K562 (cell line): ENCODE measurements at regions of chr3 and their contacts with region 1.

Region 1: DNA sequence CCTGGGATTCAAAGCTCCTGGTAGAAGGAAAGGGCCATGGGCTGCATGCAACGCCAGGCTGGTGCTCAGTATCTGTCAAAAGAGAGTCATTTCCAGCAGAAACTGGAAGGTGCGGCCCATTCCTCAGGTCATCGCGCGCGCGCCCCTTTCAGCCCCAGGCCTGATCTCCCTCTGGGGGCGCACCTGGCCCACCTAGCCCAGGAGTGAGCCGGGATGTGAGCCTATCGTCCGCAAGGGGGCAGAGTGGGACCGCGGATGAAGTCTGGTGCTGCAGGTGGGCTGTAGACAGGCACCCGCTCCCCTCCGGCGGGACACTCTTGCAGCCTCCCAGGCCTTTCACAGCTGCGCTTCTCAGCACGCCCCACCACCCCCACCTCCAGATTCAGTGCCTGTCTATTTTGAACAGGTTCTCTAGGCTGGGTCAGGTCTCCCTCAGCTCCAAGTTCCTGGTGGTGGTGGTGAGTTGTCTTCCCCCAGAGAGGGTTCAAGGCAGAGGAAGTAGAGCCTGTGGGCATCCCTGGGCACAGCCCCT is 5.8 kb upstream of the RPL29 start:
- DNase-seq: peak; percentile 83 to 84 (median 83)
- ATAC-seq: peak; percentile 92
- H3K4me3 ChIP-seq: no peak overlapping the region
- H3K27ac ChIP-seq: no peak overlapping the region
- H3K4me1 ChIP-seq: peaks cover 31 to 44% of the 10 kb centered on the region in 2 experiments
- H3K27me3 ChIP-seq: no peaks in the 10 kb centered on the region
- CTCF ChIP-seq: peak; percentile 90 to 99 (median 96)
- EP300 ChIP-seq: no peak
- POLR2A ChIP-seq: no peak
- RAD21 ChIP-seq: peak; percentile 77 to 91

Region 2: GRCh38 chr3:52123106-52123725 is 121.7 kb after region 1 on chr3:
- CTCF ChIA-PET with region 1: interaction called, 17 read pairs
- POLR2A ChIA-PET with region 1: interaction called, 3 read pairs
- in situ Hi-C with region 1: loop called (anchors 5 kb)
- intact Hi-C with region 1: no loop called
- DNase-seq: peak; percentile 73 to 82 (median 78)
- ATAC-seq: peak; percentile 95
- H3K4me3 ChIP-seq: no peak overlapping the region
- H3K27ac ChIP-seq: no peak overlapping the region
- H3K4me1 ChIP-seq: peaks cover 6 to 13% of the 10 kb centered on the region in 2 experiments; a peak in 4 of 5 replicates
- H3K27me3 ChIP-seq: no peaks in the 10 kb centered on the region
- CTCF ChIP-seq: peak; percentile 86 to 94 (median 86)
- EP300 ChIP-seq: no peak
- POLR2A ChIP-seq: no peak
- RAD21 ChIP-seq: peak; percentile 71 to 82

Region 3: GRCh38 chr3:52220380-52221026 is 219.0 kb after region 1 on chr3:
- CTCF ChIA-PET with region 1: no interaction called
- POLR2A ChIA-PET with region 1: interaction called, 3 read pairs
- in situ Hi-C with region 1: no loop called
- intact Hi-C with region 1: loop called (anchors 5 kb)
- DNase-seq: peak; percentile 75 to 82 (median 78)
- ATAC-seq: peak; percentile 91
- H3K4me3 ChIP-seq: no peak overlapping the region
- H3K27ac ChIP-seq: no peak overlapping the region
- H3K4me1 ChIP-seq: peaks cover 27 to 52% of the 10 kb centered on the region in 2 experiments
- H3K27me3 ChIP-seq: no peaks in the 10 kb centered on the region
- CTCF ChIP-seq: peak; percentile 83 to 87 (median 86)
- EP300 ChIP-seq: no peak
- POLR2A ChIP-seq: no peak
- RAD21 ChIP-seq: peak; percentile 39 to 75; a peak in 3 of 4 replicates

Region 4: DNA sequence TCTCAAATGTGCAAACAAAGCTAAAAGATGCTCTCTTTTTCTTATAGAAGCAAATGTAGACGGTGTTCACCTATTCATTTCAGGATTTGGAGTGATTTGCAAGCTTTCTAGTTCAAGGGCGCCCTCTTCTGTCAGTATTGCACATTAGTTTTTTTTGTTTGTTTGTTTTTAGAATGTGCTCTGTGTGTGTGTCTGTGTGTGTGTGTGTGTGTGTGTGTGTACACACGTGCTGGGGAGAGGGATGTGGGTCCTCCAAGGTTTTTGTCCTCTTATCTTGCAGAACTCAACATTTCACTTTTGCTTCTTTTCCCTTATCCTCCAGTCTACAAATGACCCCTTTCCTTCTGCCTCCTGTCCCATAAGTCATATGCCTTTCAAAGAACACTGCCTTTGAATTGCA is 338.1 kb after region 1 on chr3:
- CTCF ChIA-PET with region 1: interaction called, 4 read pairs
- POLR2A ChIA-PET with region 1: no interaction called
- in situ Hi-C with region 1: no loop called
- intact Hi-C with region 1: loop called (anchors 5 kb)
- DNase-seq: peak; percentile 38 to 77 (median 41)
- ATAC-seq: peak; percentile 64
- H3K4me3 ChIP-seq: no peak overlapping the region
- H3K27ac ChIP-seq: no peak overlapping the region
- H3K4me1 ChIP-seq: no peaks in the 10 kb centered on the region
- H3K27me3 ChIP-seq: no peaks in the 10 kb centered on the region
- CTCF ChIP-seq: peak; percentile 56 to 79 (median 66); a peak in 5 of 6 replicates
- EP300 ChIP-seq: no peak
- POLR2A ChIP-seq: no peak
- RAD21 ChIP-seq: peak; percentile 93 to 95

Region 5: DNA sequence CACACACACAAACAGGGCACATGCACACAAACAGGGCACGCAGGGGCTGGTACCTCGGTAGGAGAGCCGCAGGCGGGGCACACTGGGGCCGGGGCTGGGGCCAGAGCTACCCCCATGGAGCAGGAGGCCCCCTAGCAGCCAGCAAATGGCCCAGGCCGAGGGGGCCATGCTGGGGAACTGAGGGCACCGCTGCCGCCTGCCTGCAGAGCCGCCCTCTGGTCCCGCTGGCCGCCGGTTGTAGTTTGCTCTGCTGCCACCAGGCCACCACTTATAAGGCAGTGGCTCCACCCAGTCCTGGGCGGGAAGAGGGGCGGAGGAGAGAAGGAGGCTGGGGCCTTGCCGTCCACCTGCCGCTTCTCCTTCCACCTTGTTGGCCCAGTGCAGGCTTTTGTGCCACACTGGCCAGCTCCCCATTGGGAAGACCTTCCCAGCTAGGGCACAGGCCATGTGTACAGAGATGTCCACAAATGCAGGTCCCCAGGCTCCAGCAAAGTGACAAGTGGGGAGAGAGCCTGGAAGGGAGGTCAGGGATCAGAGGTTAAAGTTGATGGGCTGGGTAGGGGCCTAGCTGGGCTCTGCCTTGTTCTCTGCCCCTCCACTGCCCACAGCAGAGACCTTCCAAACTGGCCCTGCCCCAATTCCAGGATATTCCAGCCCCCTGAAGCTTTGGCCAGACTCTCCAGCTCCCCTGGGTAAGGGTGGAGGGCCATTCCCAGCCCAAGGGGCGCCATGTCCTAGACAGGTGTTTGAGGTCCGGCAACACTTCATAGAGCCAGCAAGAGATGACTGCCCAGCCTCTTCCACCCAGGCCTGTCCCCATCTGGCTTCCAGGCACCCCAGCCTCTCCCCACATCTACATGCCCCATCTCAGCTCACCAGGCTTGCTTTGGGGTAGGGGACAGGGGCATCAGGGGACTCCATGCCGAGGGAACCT is 443.6 kb after region 1 on chr3 and contains the start of gene SEMA3G:
- CTCF ChIA-PET with region 1: no interaction called
- POLR2A ChIA-PET with region 1: no interaction called
- in situ Hi-C with region 1: no loop called
- intact Hi-C with region 1: loop called (anchors 5 kb)
- DNase-seq: peak; percentile 64 to 74 (median 71)
- ATAC-seq: peak; percentile 96
- H3K4me3 ChIP-seq: no peak within 1 kb of the TSS
- H3K27ac ChIP-seq: no peak within 1 kb of the TSS
- H3K4me1 ChIP-seq: peaks cover 0 to 31% of the 10 kb centered on the region in 2 experiments; a peak in 2 of 5 replicates
- H3K27me3 ChIP-seq: peaks cover 0 to 4% of the 10 kb centered on the region in 2 experiments; a peak in 1 of 5 replicates
- CTCF ChIP-seq: peak; percentile 52 to 72 (median 54)
- EP300 ChIP-seq: no peak
- POLR2A ChIP-seq: no peak
- RAD21 ChIP-seq: no peak; a peak in 1 of 4 replicates
- polyA plus RNA-seq, gene SEMA3G: not detected